ENCODE measurements at regions of chr3 and their contacts with region 1.

Region 1: GRCh38 chr3:6504347-6504746 is 356.6 kb upstream of the GRM7 start:
- DNase-seq: no peak
- H3K4me3 ChIP-seq: no peak overlapping the region
- H3K27ac ChIP-seq: no peak overlapping the region
- H3K27me3 ChIP-seq: no peaks in the 10 kb centered on the region
- CTCF ChIP-seq: no peak

Region 2: GRCh38 chr3:6631371-6631770 is 127.0 kb after region 1 on chr3:
- CTCF ChIA-PET with region 1: no interaction called
- POLR2A ChIA-PET with region 1: no interaction called
- DNase-seq: no peak
- H3K4me3 ChIP-seq: no peak overlapping the region
- H3K27ac ChIP-seq: no peak overlapping the region
- H3K27me3 ChIP-seq: no peaks in the 10 kb centered on the region
- CTCF ChIP-seq: no peak

Region 3: GRCh38 chr3:6799264-6799915 is 295.0 kb after region 1 on chr3:
- CTCF ChIA-PET with region 1: interaction called, 10 read pairs
- POLR2A ChIA-PET with region 1: no interaction called
- DNase-seq: no peak
- H3K4me3 ChIP-seq: no peak overlapping the region
- H3K27ac ChIP-seq: no peak overlapping the region
- H3K27me3 ChIP-seq: no peaks in the 10 kb centered on the region
- CTCF ChIP-seq: peak; percentile 50

Measured in AG04450 (cell line).